Activated CD8-positive, alpha-beta T cell treated with anti-CD3 and anti-CD28 coated beads for 36 hours (primary cell): ENCODE measurements at regions of chr9 and their contacts with region 1.

Region 1: GRCh38 chr9:70602321-70603019 is 188.0 kb upstream of the KLF9 start:
- DNase-seq: peak; percentile 61
- ATAC-seq: peak; percentile 81
- H3K4me3 Mint-ChIP-seq: no peak overlapping the region
- H3K27ac Mint-ChIP-seq: no peak overlapping the region
- H3K4me1 Mint-ChIP-seq: no peaks in the 10 kb centered on the region
- H3K27me3 Mint-ChIP-seq: no peaks in the 10 kb centered on the region
- CTCF ChIP-seq: peak; percentile 91

Region 2: GRCh38 chr9:70340572-70340971 is 261.9 kb before region 1 on chr9:
- CTCF ChIA-PET with region 1: interaction called, 39 read pairs
- POLR2A ChIA-PET with region 1: no interaction called
- intact Hi-C with region 1: loop called (anchors 2 kb)
- DNase-seq: no peak
- ATAC-seq: no peak
- H3K4me3 Mint-ChIP-seq: no peak overlapping the region
- H3K27ac Mint-ChIP-seq: no peak overlapping the region
- H3K4me1 Mint-ChIP-seq: peaks cover 2% of the 10 kb centered on the region
- H3K27me3 Mint-ChIP-seq: no peaks in the 10 kb centered on the region
- CTCF ChIP-seq: peak; percentile 69

Region 3: GRCh38 chr9:70392189-70392588 is 210.3 kb before region 1 on chr9:
- CTCF ChIA-PET with region 1: interaction called, 17 read pairs
- POLR2A ChIA-PET with region 1: no interaction called
- intact Hi-C with region 1: no loop called
- DNase-seq: peak; percentile 26
- ATAC-seq: peak; percentile 59
- H3K4me3 Mint-ChIP-seq: no peak overlapping the region
- H3K27ac Mint-ChIP-seq: no peak overlapping the region
- H3K4me1 Mint-ChIP-seq: peaks cover 81% of the 10 kb centered on the region
- H3K27me3 Mint-ChIP-seq: no peaks in the 10 kb centered on the region
- CTCF ChIP-seq: peak; percentile 38

Region 4: GRCh38 chr9:70419546-70420266 is 182.8 kb before region 1 on chr9:
- CTCF ChIA-PET with region 1: interaction called, 17 read pairs
- POLR2A ChIA-PET with region 1: interaction called, 8 read pairs
- intact Hi-C with region 1: loop called (anchors 5 kb)
- DNase-seq: peak; percentile 94
- ATAC-seq: peak; percentile 52
- H3K4me3 Mint-ChIP-seq: peak overlapping the region; percentile 81
- H3K27ac Mint-ChIP-seq: peak overlapping the region; percentile 96
- H3K4me1 Mint-ChIP-seq: peaks cover 48% of the 10 kb centered on the region
- H3K27me3 Mint-ChIP-seq: no peaks in the 10 kb centered on the region
- CTCF ChIP-seq: no peak

Region 5: GRCh38 chr9:70510157-70510770 is 92.2 kb before region 1 on chr9:
- CTCF ChIA-PET with region 1: interaction called, 20 read pairs
- POLR2A ChIA-PET with region 1: no interaction called
- intact Hi-C with region 1: no loop called
- DNase-seq: peak; percentile 71
- ATAC-seq: peak; percentile 65
- H3K4me3 Mint-ChIP-seq: no peak overlapping the region
- H3K27ac Mint-ChIP-seq: no peak overlapping the region
- H3K4me1 Mint-ChIP-seq: peaks cover 3% of the 10 kb centered on the region
- H3K27me3 Mint-ChIP-seq: no peaks in the 10 kb centered on the region
- CTCF ChIP-seq: peak; percentile 57

Region 6: GRCh38 chr9:70614786-70615463 is 12.5 kb after region 1 on chr9:
- CTCF ChIA-PET with region 1: interaction called, 25 read pairs
- POLR2A ChIA-PET with region 1: interaction called, 3 read pairs
- intact Hi-C with region 1: no loop called
- DNase-seq: no peak
- ATAC-seq: no peak
- H3K4me3 Mint-ChIP-seq: no peak overlapping the region
- H3K27ac Mint-ChIP-seq: no peak overlapping the region
- H3K4me1 Mint-ChIP-seq: no peaks in the 10 kb centered on the region
- H3K27me3 Mint-ChIP-seq: peaks cover 1% of the 10 kb centered on the region
- CTCF ChIP-seq: no peak

Region 7: DNA sequence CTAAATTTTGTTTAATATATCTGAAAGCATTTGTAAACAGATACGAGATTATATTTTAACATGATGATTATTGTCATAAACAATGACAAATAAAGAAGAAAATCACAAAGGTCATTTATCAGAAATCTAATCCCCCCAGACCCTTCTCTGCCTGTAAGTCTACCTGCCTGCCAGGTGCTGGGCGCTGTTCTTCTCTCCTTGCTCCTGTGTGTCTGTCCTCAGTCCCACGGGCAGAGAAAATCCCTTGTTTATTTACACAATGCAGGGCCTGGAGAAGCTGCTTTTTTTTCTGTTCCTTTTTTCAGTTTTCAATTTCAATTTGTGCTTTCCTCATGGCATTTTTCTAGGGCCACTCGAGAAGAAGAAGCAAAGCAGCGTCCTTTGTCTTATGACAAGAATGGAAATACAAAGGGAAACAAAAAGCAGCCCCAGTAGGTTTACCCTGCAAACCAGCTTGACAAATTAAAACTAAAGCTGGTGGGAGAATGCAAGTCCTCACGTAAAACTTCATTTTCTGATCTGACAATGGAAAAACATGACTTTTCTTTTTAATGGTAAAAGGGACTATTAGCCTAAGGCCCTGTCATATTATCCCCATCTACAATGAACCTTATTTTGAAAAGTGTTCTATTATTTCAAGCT is 94.3 kb after region 1 on chr9:
- CTCF ChIA-PET with region 1: no interaction called
- POLR2A ChIA-PET with region 1: no interaction called
- intact Hi-C with region 1: no loop called
- DNase-seq: no peak
- ATAC-seq: no peak
- H3K4me3 Mint-ChIP-seq: no peak overlapping the region
- H3K27ac Mint-ChIP-seq: no peak overlapping the region
- H3K4me1 Mint-ChIP-seq: no peaks in the 10 kb centered on the region
- H3K27me3 Mint-ChIP-seq: peaks cover 3% of the 10 kb centered on the region
- CTCF ChIP-seq: no peak

Region 8: GRCh38 chr9:70747261-70747718 is 144.8 kb after region 1 on chr9:
- CTCF ChIA-PET with region 1: no interaction called
- POLR2A ChIA-PET with region 1: no interaction called
- intact Hi-C with region 1: no loop called
- DNase-seq: no peak
- ATAC-seq: no peak
- H3K4me3 Mint-ChIP-seq: no peak overlapping the region
- H3K27ac Mint-ChIP-seq: no peak overlapping the region
- H3K4me1 Mint-ChIP-seq: no peaks in the 10 kb centered on the region
- H3K27me3 Mint-ChIP-seq: no peaks in the 10 kb centered on the region
- CTCF ChIP-seq: no peak